Activated CD4-positive, alpha-beta T cell treated with anti-CD3 and anti-CD28 coated beads for 36 hours (primary cell): ENCODE measurements at regions of chr1 and their contacts with region 1.

Region 1: GRCh38 chr1:199463521-199464128 is 563.9 kb upstream of the NR5A2 start:
- DNase-seq: peak; percentile 51
- ATAC-seq: peak; percentile 60
- H3K4me3 Mint-ChIP-seq: no peak overlapping the region
- H3K27ac Mint-ChIP-seq: no peak overlapping the region
- H3K4me1 Mint-ChIP-seq: no peaks in the 10 kb centered on the region
- H3K27me3 Mint-ChIP-seq: peaks cover 3% of the 10 kb centered on the region

Region 2: DNA sequence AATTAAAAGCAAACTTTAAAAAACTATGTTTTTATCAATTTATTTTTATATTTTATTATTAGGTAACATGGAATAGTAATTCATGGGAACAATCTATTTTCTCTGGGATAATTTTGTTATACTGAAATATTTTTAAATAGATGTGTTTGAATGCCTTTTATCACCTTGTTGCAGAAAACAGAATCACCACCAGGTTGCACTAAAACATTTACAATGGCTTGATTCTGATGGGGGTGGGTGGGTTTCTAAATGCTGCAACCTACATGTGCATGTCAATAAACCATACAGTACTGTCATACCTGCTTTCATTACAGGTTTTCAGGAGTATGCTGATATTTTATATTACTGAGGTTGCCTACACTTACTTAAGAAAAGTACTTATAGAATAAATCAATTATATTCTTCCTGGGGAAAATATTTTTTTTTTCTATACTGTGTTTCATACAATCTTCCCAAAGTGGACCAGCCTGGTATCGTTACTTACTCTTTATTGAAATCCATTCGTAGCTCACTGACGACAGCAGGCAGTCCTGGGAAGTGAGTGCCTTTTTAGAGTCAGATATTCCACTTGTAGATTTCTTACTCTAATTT is 692.0 kb before region 1 on chr1:
- CTCF ChIA-PET with region 1: no interaction called
- POLR2A ChIA-PET with region 1: no interaction called
- intact Hi-C with region 1: loop called (anchors 2 to 10 kb)
- DNase-seq: peak; percentile 24
- ATAC-seq: peak; percentile 70
- H3K4me3 Mint-ChIP-seq: no peak overlapping the region
- H3K27ac Mint-ChIP-seq: no peak overlapping the region
- H3K4me1 Mint-ChIP-seq: peaks cover 6% of the 10 kb centered on the region
- H3K27me3 Mint-ChIP-seq: no peaks in the 10 kb centered on the region

Region 3: GRCh38 chr1:199529324-199529723 is 65.7 kb after region 1 on chr1:
- CTCF ChIA-PET with region 1: no interaction called
- POLR2A ChIA-PET with region 1: no interaction called
- intact Hi-C with region 1: no loop called
- DNase-seq: no peak
- ATAC-seq: no peak
- H3K4me3 Mint-ChIP-seq: no peak overlapping the region
- H3K27ac Mint-ChIP-seq: no peak overlapping the region
- H3K4me1 Mint-ChIP-seq: no peaks in the 10 kb centered on the region
- H3K27me3 Mint-ChIP-seq: no peaks in the 10 kb centered on the region

Region 4: GRCh38 chr1:199646761-199647160 is 183.1 kb after region 1 on chr1:
- CTCF ChIA-PET with region 1: no interaction called
- POLR2A ChIA-PET with region 1: no interaction called
- intact Hi-C with region 1: no loop called
- DNase-seq: no peak
- ATAC-seq: no peak
- H3K4me3 Mint-ChIP-seq: no peak overlapping the region
- H3K27ac Mint-ChIP-seq: no peak overlapping the region
- H3K4me1 Mint-ChIP-seq: no peaks in the 10 kb centered on the region
- H3K27me3 Mint-ChIP-seq: peaks cover 6% of the 10 kb centered on the region

Region 5: GRCh38 chr1:199909135-199909534 is 445.5 kb after region 1 on chr1:
- CTCF ChIA-PET with region 1: no interaction called
- POLR2A ChIA-PET with region 1: no interaction called
- intact Hi-C with region 1: no loop called
- DNase-seq: no peak
- ATAC-seq: no peak
- H3K4me3 Mint-ChIP-seq: no peak overlapping the region
- H3K27ac Mint-ChIP-seq: no peak overlapping the region
- H3K4me1 Mint-ChIP-seq: no peaks in the 10 kb centered on the region
- H3K27me3 Mint-ChIP-seq: peaks cover 6% of the 10 kb centered on the region